KBM-7 (cell line): ENCODE measurements at regions of chr6 and their contacts with region 1.

Region 1: DNA sequence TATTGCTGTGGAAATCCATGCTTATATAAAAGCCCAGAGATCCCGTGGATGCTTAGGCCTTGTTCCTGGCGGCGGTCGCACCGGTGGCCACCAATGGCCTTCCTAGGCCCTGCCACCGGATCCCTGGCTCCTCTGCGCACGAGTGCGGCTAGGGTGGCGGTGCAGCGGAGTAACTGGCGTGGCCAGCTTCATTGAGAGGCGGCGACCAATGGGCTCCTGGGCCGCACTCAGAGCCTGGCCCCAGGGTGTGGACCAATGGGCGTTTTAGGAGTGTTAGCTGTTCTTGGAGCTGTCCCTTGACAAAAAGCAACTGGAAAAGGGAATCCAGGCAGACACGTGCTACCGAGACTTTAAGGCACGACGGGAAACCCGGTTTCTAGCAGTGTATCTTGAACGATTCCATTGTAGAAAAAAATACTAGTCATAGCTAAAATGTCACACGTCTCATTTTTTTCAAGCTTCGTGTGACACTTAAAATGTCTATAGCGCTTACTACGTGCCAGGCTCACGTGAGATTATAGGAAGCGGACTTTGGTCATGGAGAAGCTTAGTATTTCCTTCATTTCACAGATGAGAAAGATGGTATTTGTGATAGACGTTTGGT is 1.7 kb downstream of the AMD1 start:
- DNase-seq: peak; percentile 89

Region 2: GRCh38 chr6:110682460-110682853 is 193.8 kb before region 1 on chr6:
- in situ Hi-C with region 1: loop called (anchors 25 kb)
- DNase-seq: peak; percentile 92

Region 3: GRCh38 chr6:111388681-111389080 is 512.4 kb after region 1 on chr6:
- in situ Hi-C with region 1: no loop called
- DNase-seq: no peak